Naive thymus-derived CD8-positive, alpha-beta T cell (primary cell): ENCODE measurements at regions of chr9 and their contacts with region 1.

Region 1: GRCh38 chr9:136631038-136632000 is 31.4 kb upstream of the EGFL7 start:
- DNase-seq: peak; percentile 68 to 91 (median 76)
- ATAC-seq: peak; percentile 97 to 98
- H3K4me3 Mint-ChIP-seq: no peak overlapping the region
- H3K27ac Mint-ChIP-seq: no peak overlapping the region
- H3K4me1 Mint-ChIP-seq: peaks cover 2 to 9% (median 3%) of the 10 kb centered on the region in 4 donors
- H3K27me3 Mint-ChIP-seq: peaks cover 0 to 7% (median 0%) of the 10 kb centered on the region in 5 donors

Region 2: GRCh38 chr9:136455043-136456002 is 176.0 kb before region 1 on chr9:
- POLR2A ChIA-PET with region 1: no interaction called
- DNase-seq: no peak
- ATAC-seq: peak in 1 of 2 donors; percentile 19
- H3K4me3 Mint-ChIP-seq: no peak overlapping the region
- H3K27ac Mint-ChIP-seq: peak overlapping the region in 1 of 10 donors; percentile 16
- H3K4me1 Mint-ChIP-seq: no peaks in the 10 kb centered on the region
- H3K27me3 Mint-ChIP-seq: no peaks in the 10 kb centered on the region

Region 3: DNA sequence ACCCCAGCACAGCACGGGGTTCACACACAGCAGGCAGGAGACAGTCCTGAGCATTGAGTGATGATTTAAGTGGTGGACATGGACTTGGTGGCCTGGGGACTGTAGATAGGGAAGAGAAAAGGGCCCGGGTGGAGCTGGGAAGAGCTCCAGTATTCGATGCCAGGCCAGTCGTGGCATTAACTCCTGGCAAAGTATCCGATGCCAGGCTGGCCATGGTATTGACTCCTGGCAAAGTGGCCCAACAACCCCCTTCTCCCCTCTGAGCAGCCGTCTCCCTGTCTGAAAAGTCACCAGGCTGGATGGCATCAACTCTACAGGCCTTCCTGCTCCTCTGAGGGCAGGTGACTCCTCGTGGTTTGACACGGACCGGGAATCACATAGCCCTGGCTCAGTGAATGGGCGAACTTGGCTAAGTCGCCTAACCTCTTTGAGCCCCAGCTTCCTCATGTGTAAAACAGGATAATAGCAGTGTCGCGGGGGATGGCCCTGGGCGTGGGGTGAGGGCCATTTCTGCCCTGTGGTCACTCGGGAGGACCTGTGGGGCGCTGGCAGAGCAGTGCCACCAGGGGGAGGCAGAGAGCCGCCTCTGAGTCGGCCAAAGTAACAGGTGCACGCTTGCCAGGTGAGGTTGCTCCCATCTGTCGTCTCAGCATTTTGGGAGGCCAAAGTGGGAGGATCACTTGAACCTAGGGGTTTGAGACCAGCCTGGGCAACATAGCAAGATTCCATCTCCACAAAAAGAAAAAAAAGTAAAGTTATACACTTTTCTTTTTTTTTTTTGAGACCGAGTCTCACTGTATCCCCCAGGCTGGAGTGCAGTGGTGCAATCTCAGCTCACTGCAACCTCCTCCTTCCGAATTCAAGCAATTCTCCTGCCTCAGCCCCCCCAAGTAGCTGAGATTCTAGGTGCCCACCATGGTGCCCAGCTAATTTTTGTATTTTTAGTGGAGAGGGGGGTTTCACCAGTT is 142.8 kb before region 1 on chr9:
- POLR2A ChIA-PET with region 1: interaction called, 14 read pairs
- DNase-seq: peak; percentile 53 to 86 (median 75)
- ATAC-seq: peak; percentile 41 to 44
- H3K4me3 Mint-ChIP-seq: no peak overlapping the region
- H3K27ac Mint-ChIP-seq: no peak overlapping the region
- H3K4me1 Mint-ChIP-seq: peaks cover 3 to 14% (median 7%) of the 10 kb centered on the region in 4 donors
- H3K27me3 Mint-ChIP-seq: no peaks in the 10 kb centered on the region

Region 4: GRCh38 chr9:136691316-136692184 is 60.2 kb after region 1 on chr9:
- POLR2A ChIA-PET with region 1: no interaction called
- DNase-seq: no peak
- ATAC-seq: no peak
- H3K4me3 Mint-ChIP-seq: no peak overlapping the region
- H3K27ac Mint-ChIP-seq: peak overlapping the region in 1 of 10 donors; percentile 40
- H3K4me1 Mint-ChIP-seq: peaks cover 0 to 14% (median 8%) of the 10 kb centered on the region in 4 donors
- H3K27me3 Mint-ChIP-seq: peaks cover 0 to 3% (median 0%) of the 10 kb centered on the region in 5 donors